CD8-positive, alpha-beta memory T cell (primary cell): ENCODE measurements at regions of chr1 and their contacts with region 1.

Region 1: GRCh38 chr1:113452921-113453770 is 62.8 kb downstream of the MAGI3 start:
- DNase-seq: peak in 2 of 5 donors; percentile 3 to 42
- H3K4me3 ChIP-seq: no peak overlapping the region
- H3K4me3 Mint-ChIP-seq: no peak overlapping the region
- H3K27ac ChIP-seq: no peak overlapping the region
- H3K27ac Mint-ChIP-seq: no peak overlapping the region
- H3K4me1 ChIP-seq: no peaks in the 10 kb centered on the region
- H3K4me1 Mint-ChIP-seq: no peaks in the 10 kb centered on the region
- H3K27me3 ChIP-seq: no peaks in the 10 kb centered on the region
- H3K27me3 Mint-ChIP-seq: peaks cover 9 to 21% of the 10 kb centered on the region in 2 donors

Region 2: DNA sequence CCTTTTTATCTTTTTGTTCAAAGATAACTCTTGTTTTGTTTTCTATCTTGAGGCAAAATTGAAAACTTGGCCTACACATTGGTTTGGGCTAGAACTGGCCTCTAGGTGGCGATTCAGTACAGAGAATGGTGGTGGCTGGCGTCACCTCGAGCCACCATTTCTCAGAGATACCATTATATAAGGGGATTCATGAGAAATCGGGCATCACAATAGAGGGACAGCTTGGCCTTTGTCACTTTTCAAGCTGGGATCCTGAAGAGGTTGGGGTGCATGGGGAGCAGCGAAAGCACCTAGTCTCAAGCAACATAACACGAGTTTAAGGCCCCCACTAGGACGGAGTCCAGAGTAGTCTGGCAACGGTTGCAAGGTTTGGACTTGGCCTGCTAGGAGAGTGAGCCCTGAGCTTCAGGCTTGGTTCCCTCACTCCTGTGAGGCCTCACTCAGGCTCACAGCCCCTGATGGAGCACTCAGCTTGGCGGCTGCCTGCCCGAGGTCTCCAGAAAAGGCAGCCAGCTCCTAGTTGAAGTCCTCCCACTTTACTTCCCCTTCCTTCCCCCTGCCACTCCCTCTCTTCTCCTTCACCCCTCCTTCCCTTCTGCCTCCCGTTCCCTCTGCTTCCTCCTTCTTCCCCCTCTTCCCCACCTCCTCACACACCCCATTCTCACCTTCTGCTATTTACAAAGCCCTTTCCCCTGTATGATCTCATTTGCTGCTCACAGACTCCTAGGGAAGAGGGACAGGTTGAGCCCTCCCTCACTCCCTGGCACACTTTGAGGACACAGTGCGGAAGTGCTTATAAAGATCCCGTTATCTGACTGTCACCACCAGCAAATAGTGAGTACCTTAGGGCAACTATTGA is 312.3 kb before region 1 on chr1:
- CTCF ChIA-PET with region 1: interaction called, 10 read pairs
- POLR2A ChIA-PET with region 1: no interaction called
- DNase-seq: peak; percentile 6 to 54 (median 18)
- H3K4me3 ChIP-seq: no peak overlapping the region
- H3K4me3 Mint-ChIP-seq: no peak overlapping the region
- H3K27ac ChIP-seq: peak overlapping the region; percentile 15
- H3K27ac Mint-ChIP-seq: peak overlapping the region in 2 of 8 donors; percentile 23 to 77
- H3K4me1 ChIP-seq: no peaks in the 10 kb centered on the region
- H3K4me1 Mint-ChIP-seq: peaks cover 0 to 14% (median 8%) of the 10 kb centered on the region in 3 donors
- H3K27me3 ChIP-seq: no peaks in the 10 kb centered on the region
- H3K27me3 Mint-ChIP-seq: peaks cover 0 to 1% of the 10 kb centered on the region in 2 donors